Naive thymus-derived CD4-positive, alpha-beta T cell (primary cell): ENCODE measurements at regions of chr1 and their contacts with region 1.

Region 1: DNA sequence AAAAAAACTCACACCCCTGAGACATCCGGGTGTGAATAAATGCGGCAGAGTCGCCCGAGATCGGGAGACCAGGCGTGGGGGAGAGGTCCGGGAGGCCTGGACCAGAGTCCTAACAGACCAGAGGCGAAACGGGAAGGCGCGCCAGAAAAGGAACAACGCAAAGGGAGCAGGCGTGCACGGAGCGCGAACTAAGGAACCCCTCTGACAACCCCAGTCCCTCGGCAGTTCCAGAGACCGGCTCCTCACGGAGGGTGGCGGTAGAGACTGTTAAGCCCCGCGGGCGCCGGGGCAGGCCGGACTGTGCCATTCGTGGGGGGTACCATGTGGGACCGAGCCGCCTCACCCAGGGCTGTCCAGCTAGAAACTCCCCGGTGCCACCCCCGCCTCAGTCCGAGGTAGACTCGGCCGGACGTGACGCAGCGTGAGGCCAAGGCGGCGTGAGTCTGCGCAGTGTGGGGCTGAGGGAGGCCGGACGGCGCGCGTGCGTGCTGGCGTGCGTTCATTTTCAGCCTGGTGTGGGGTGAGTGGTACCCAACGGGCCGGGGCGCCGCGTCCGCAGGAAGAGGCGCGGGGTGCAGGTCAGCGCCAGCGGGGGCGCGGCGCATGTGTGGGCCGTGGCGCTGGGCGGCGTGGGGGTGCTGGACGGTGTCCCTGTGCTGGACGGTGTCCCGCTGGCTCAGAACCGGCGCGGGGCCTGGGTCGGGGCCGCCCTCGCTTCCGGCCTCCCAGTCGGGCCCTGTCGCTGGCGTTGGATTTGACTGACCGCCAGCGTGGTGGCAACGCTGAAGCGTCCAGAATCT is at the start of gene PARK7:
- DNase-seq: peak; percentile 97 to 100 (median 99)
- ATAC-seq: peak; percentile 99
- H3K4me3 ChIP-seq: peak within 1 kb of the TSS; percentile 65
- H3K4me3 Mint-ChIP-seq: peak within 1 kb of the TSS; percentile 84 to 100 (median 98)
- H3K27ac ChIP-seq: peak within 1 kb of the TSS; percentile 95
- H3K27ac Mint-ChIP-seq: peak within 1 kb of the TSS; percentile 97 to 100 (median 99)
- H3K4me1 ChIP-seq: peaks cover 28 to 44% of the 10 kb centered on the region in 2 donors
- H3K4me1 Mint-ChIP-seq: peaks cover 16 to 80% (median 58%) of the 10 kb centered on the region in 7 donors
- H3K27me3 ChIP-seq: no peaks in the 10 kb centered on the region
- H3K27me3 Mint-ChIP-seq: no peaks in the 10 kb centered on the region
- total RNA-seq, gene PARK7: 97.1 to 255 (median 106) TPM

Region 2: DNA sequence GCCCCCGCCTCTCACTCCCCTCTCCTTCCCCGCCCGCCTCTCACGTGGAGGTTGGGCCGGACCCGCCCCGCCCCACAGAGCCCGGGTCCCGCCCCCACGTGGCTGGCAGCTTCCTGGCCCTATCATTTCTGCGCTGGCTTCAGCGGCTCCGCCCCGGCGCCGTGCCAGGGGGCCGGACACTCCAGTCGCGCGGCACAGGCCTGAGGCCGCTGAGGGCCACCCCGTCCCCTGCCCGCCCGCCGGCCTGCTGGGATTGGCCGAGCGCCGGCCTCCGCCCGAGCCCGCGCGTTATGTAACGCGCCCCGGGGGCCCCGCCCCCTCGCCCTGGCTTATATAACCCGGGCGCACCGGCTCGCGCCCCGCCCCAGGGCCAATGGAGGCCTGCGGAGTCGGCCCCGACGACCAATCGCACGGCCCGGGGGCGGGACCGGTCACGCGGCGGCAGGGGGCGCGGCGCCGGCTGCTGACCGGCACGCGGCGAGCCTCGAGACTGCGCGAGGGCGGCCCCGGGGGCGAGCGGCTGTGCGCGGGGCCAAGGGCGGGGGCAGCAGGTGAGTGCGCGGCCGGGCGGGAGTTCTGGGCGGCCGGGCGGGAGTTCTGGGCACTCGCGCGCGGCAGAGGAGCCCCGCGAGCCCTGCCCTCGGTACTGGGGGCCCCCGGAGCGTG is 177.5 kb before region 1 on chr1 and contains the start of gene PER3:
- CTCF ChIA-PET with region 1: no interaction called
- POLR2A ChIA-PET with region 1: no interaction called
- intact Hi-C with region 1: loop called (anchors 1 to 2 kb)
- DNase-seq: peak; percentile 84 to 97 (median 94)
- ATAC-seq: peak; percentile 93
- H3K4me3 ChIP-seq: peak within 1 kb of the TSS; percentile 58
- H3K4me3 Mint-ChIP-seq: peak within 1 kb of the TSS; percentile 67 to 85 (median 76)
- H3K27ac ChIP-seq: peak within 1 kb of the TSS; percentile 99
- H3K27ac Mint-ChIP-seq: peak within 1 kb of the TSS in 8 of 9 donors; percentile 63 to 91 (median 82)
- H3K4me1 ChIP-seq: peaks cover 8 to 17% of the 10 kb centered on the region in 2 donors
- H3K4me1 Mint-ChIP-seq: peaks cover 18 to 39% (median 28%) of the 10 kb centered on the region in 7 donors
- H3K27me3 ChIP-seq: no peaks in the 10 kb centered on the region
- H3K27me3 Mint-ChIP-seq: peaks cover 0 to 16% (median 0%) of the 10 kb centered on the region in 5 donors
- total RNA-seq, gene PER3: 2.2 to 10.4 (median 5.1) TPM

Region 3: GRCh38 chr1:7902478-7903085 is 58.8 kb before region 1 on chr1:
- CTCF ChIA-PET with region 1: interaction called, 3 read pairs
- POLR2A ChIA-PET with region 1: no interaction called
- intact Hi-C with region 1: loop called in 1 of 2 experiments (anchors 2 kb)
- DNase-seq: peak; percentile 23 to 59 (median 48)
- ATAC-seq: peak; percentile 83
- H3K4me3 ChIP-seq: peak overlapping the region; percentile 50
- H3K4me3 Mint-ChIP-seq: peak overlapping the region in 9 of 10 donors; percentile 54 to 74 (median 62)
- H3K27ac ChIP-seq: no peak overlapping the region
- H3K27ac Mint-ChIP-seq: peak overlapping the region in 2 of 9 donors; percentile 32 to 55
- H3K4me1 ChIP-seq: peaks cover 0 to 4% of the 10 kb centered on the region in 2 donors
- H3K4me1 Mint-ChIP-seq: peaks cover 0 to 12% (median 4%) of the 10 kb centered on the region in 7 donors
- H3K27me3 ChIP-seq: no peaks in the 10 kb centered on the region
- H3K27me3 Mint-ChIP-seq: peaks cover 0 to 10% (median 0%) of the 10 kb centered on the region in 5 donors

Region 4: DNA sequence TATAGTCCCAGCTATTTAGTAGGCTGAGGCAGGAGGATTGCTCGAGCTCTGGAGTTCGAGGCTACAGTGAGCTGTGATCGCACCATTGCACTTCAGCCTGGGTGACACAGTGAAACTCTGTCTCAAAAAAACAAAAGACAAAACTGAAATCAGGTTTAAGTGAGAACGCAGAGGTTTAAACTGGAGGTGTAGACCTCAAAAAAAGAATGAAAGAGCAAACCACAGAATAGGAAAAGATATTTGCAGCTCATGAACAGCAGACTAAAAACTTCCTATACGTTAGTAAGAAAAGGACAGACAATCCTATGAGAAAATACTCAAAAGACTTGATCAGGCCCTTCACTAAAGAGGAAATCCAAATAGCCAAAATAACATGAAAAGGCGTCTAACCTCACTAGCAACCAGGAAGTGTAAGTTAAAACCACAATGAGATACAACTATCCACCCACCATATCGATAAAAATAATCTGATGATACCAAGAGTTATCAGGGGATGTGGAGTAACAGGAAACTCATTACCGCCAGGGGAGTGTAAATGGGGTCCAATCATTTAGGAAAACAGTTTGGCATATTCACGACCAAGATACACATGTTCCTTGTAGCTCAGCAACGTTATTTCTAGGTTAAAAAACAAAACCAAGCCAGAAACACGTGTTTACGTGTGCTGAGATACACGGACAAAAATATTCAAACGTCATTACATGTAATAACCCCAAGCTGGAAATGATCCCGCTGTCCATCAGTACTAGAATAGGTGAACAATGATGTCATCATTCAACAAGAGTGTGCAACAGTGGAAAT is 30.6 kb before region 1 on chr1:
- CTCF ChIA-PET with region 1: no interaction called
- POLR2A ChIA-PET with region 1: interaction called, 3 read pairs
- intact Hi-C with region 1: loop called in 1 of 2 experiments (anchors 1 kb)
- DNase-seq: no peak
- ATAC-seq: peak; percentile 72
- H3K4me3 ChIP-seq: peak overlapping the region; percentile 10
- H3K4me3 Mint-ChIP-seq: peak overlapping the region; percentile 42 to 66 (median 58)
- H3K27ac ChIP-seq: no peak overlapping the region
- H3K27ac Mint-ChIP-seq: peak overlapping the region in 6 of 9 donors; percentile 5 to 67 (median 52)
- H3K4me1 ChIP-seq: peaks cover 13 to 17% of the 10 kb centered on the region in 2 donors
- H3K4me1 Mint-ChIP-seq: peaks cover 19 to 26% (median 24%) of the 10 kb centered on the region in 7 donors
- H3K27me3 ChIP-seq: no peaks in the 10 kb centered on the region
- H3K27me3 Mint-ChIP-seq: peaks cover 0 to 6% (median 0%) of the 10 kb centered on the region in 5 donors

Region 5: GRCh38 chr1:7983086-7983778 is 21.8 kb after region 1 on chr1:
- CTCF ChIA-PET with region 1: interaction called, 3 read pairs
- POLR2A ChIA-PET with region 1: no interaction called
- intact Hi-C with region 1: loop called in 1 of 2 experiments (anchors 1 kb)
- DNase-seq: no peak
- ATAC-seq: no peak
- H3K4me3 ChIP-seq: no peak overlapping the region
- H3K4me3 Mint-ChIP-seq: no peak overlapping the region
- H3K27ac ChIP-seq: no peak overlapping the region
- H3K27ac Mint-ChIP-seq: no peak overlapping the region
- H3K4me1 ChIP-seq: peaks cover 0 to 8% of the 10 kb centered on the region in 2 donors
- H3K4me1 Mint-ChIP-seq: peaks cover 5 to 13% (median 10%) of the 10 kb centered on the region in 7 donors
- H3K27me3 ChIP-seq: no peaks in the 10 kb centered on the region
- H3K27me3 Mint-ChIP-seq: no peaks in the 10 kb centered on the region

Region 6: DNA sequence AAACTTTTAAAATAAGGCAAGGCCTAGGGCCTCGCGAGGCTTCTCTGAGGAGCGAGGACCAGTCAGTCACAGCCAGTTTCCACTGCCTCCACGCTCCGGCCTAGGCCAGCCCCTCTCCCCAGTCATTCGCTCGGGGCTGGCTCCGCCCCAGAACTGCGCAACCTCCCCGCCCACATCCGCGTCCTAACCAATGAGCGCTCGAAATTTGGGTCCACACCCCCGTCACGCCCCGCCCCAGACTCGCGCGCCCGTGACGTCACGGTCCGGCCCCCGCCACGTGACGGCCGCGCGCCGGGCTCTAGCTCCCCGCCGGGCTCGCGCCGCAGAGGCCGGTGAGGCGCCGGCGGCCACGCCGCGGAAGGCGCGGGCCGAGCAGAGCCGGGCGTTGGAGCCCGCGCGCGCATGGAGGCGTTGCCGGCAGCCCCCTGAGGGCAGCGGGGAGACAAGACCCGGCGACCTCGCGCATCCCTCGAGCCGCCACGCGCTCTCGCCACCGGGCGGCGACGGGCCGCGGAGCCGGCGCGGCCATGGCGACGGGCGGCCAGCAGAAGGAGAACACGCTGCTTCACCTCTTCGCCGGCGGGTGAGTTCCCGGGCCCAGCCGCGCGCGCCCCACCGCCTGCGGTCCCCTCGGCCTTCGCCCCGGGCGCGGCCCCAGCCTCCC is 1577.9 kb after region 1 on chr1 and contains the start of gene SLC25A33:
- CTCF ChIA-PET with region 1: no interaction called
- POLR2A ChIA-PET with region 1: no interaction called
- intact Hi-C with region 1: loop called in 1 of 2 experiments (anchors 10 kb)
- DNase-seq: peak; percentile 92 to 99 (median 95)
- ATAC-seq: peak; percentile 99
- H3K4me3 ChIP-seq: peak within 1 kb of the TSS; percentile 58
- H3K4me3 Mint-ChIP-seq: peak within 1 kb of the TSS; percentile 86 to 93 (median 90)
- H3K27ac ChIP-seq: peak within 1 kb of the TSS; percentile 73
- H3K27ac Mint-ChIP-seq: peak within 1 kb of the TSS; percentile 85 to 97 (median 91)
- H3K4me1 ChIP-seq: peaks cover 5 to 8% of the 10 kb centered on the region in 2 donors
- H3K4me1 Mint-ChIP-seq: peaks cover 18 to 38% (median 31%) of the 10 kb centered on the region in 7 donors
- H3K27me3 ChIP-seq: no peaks in the 10 kb centered on the region
- H3K27me3 Mint-ChIP-seq: no peaks in the 10 kb centered on the region
- total RNA-seq, gene SLC25A33: 2.5 to 5.8 (median 3.9) TPM